ENCODE measurements at regions of chr3 and their contacts with region 1.

Region 1: DNA sequence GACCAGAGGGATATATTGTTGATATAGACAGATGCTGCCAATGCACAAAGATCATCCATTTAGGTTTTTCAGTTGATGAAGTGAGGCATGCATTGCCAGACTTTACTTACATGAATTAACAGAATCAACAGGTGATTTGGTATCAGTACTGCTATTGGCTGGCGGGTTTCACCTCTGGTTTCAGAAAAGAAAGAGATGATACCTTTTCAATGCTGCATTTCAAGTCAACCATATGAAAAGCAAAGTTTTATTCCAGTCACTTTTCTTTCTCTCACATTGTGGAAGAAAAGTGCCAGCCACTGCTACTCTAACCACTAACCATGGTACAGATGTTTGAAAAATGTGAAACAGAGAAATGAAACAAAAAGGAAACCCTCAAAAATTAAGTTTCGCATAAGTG is 289.1 kb downstream of the TIGIT start:
- DNase-seq: no peak
- ATAC-seq: no peak
- H3K4me3 ChIP-seq: no peak overlapping the region
- H3K27ac ChIP-seq: peak overlapping the region in 3 of 10 donors; percentile 9 to 80 (median 21)
- H3K4me1 ChIP-seq: peaks cover 3 to 49% (median 33%) of the 10 kb centered on the region in 9 donors
- H3K27me3 ChIP-seq: no peaks in the 10 kb centered on the region
- CTCF ChIP-seq: no peak

Region 2: DNA sequence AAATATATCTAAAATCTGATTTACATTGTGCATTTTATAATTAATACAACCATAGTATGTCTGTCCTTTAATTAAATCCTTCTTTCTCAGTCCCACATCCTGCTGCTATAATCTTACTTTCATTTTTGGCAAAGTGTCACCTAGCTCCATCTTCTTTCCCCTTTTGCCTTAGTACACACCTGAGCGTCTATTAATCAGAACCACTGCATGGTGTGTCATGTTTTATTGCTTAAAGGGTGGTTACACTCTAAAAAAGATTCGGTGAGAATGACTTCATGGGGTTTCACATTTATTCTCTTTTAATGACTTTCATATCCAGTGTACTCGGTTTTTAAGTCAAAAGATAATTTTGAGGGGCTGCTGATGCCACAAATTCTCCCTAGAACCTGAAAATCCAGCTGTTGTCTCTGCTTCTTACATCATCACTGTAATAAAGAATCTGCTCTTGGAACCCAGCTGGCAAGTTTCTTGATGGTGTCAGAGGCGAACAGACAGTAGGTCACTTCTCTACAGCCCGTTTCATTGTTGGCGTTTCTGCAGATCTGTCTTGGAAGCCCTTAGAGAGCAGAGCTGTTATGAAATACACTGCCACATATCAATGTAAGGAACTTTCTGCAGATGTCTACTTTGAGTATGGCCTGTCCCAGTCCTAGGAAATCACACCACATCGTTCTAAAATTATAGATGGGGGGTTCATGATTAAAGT is 189.4 kb before region 1 on chr3:
- intact Hi-C with region 1: loop called in 3 of 10 experiments (anchors 10 kb)
- DNase-seq: no peak
- ATAC-seq: peak in 5 of 8 donors; percentile 48 to 70 (median 59)
- H3K4me3 ChIP-seq: no peak overlapping the region
- H3K27ac ChIP-seq: peak overlapping the region in 1 of 10 donors; percentile 39
- H3K4me1 ChIP-seq: peaks cover 0 to 53% (median 6%) of the 10 kb centered on the region in 9 donors
- H3K27me3 ChIP-seq: no peaks in the 10 kb centered on the region
- CTCF ChIP-seq: no peak